ENCODE measurements at regions of chr9 and their contacts with region 1.

Region 1: GRCh38 chr9:124861342-124862229 is at the starts of genes ARPC5L and RPL35:
- DNase-seq: peak; percentile 96
- ATAC-seq: peak; percentile 96
- H3K4me3 ChIP-seq: peak within 1 kb of the TSS; percentile 43 to 91 (median 81)
- H3K4me3 Mint-ChIP-seq: peak within 1 kb of the TSS; percentile 99
- H3K27ac ChIP-seq: peak within 1 kb of the TSS; percentile 88 to 93
- H3K27ac Mint-ChIP-seq: peak within 1 kb of the TSS; percentile 98
- H3K4me1 ChIP-seq: peaks cover 18 to 34% of the 10 kb centered on the region in 2 donors
- H3K4me1 Mint-ChIP-seq: peaks cover 28% of the 10 kb centered on the region
- H3K27me3 ChIP-seq: no peaks in the 10 kb centered on the region
- H3K27me3 Mint-ChIP-seq: no peaks in the 10 kb centered on the region
- CTCF ChIP-seq: peak; percentile 48
- total RNA-seq, gene ARPC5L: 37.3 and 41.2 TPM in 2 replicates
- total RNA-seq, gene RPL35: 1,533 and 1,609 TPM in 2 replicates

Region 2: DNA sequence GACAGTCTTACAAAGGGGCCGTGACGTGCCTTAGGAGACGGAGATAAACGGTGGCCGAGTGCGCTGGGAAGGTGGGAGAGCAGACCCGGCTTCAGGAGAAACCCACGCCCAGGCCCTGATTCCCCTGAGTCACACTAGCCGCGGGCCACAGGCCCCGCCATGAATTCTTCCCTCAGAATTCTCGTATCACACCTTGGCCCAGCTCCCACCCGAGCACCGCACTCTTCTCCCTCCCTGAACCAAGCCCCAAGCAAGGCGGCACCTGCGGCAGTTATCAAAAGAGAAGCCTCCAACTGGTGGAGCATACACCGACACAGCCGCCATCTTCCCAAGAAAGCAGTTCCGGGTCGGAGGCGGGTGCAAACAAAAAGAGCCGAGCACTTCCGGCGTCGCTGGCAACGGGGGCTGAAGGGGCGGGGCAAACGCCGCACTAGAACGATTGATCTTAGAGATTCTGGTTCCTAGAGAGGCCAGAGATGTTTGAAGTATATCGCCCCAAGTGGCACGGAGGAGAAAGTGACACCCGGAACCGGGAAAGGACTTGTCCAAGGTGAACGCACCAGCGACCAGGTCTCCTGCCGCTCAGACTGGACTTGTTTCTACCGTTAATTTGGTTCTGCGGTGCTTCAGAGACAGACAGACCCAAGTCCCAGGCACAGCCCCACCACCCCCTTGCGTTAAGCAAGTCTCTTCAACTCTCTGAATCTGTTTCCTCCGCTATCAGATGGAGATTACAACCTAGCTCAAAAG is 446.3 kb before region 1 on chr9 and contains the start of gene PSMB7:
- CTCF ChIA-PET with region 1: no interaction called
- POLR2A ChIA-PET with region 1: no interaction called
- intact Hi-C with region 1: loop called (anchors 5 kb)
- DNase-seq: peak; percentile 98
- ATAC-seq: peak; percentile 96
- H3K4me3 ChIP-seq: peak within 1 kb of the TSS; percentile 81 to 89 (median 87)
- H3K4me3 Mint-ChIP-seq: peak within 1 kb of the TSS; percentile 98
- H3K27ac ChIP-seq: peak within 1 kb of the TSS; percentile 48 to 82
- H3K27ac Mint-ChIP-seq: peak within 1 kb of the TSS; percentile 90
- H3K4me1 ChIP-seq: peaks cover 6 to 27% of the 10 kb centered on the region in 2 donors
- H3K4me1 Mint-ChIP-seq: peaks cover 29% of the 10 kb centered on the region
- H3K27me3 ChIP-seq: no peaks in the 10 kb centered on the region
- H3K27me3 Mint-ChIP-seq: no peaks in the 10 kb centered on the region
- CTCF ChIP-seq: peak; percentile 89
- total RNA-seq, gene PSMB7: 69.7 and 73.1 TPM in 2 replicates

Region 3: GRCh38 chr9:125200210-125201047 is 338.8 kb after region 1 on chr9 and contains the start of gene RABEPK:
- CTCF ChIA-PET with region 1: no interaction called
- POLR2A ChIA-PET with region 1: interaction called, 6 read pairs
- intact Hi-C with region 1: loop called (anchors 5 kb)
- DNase-seq: peak; percentile 94
- ATAC-seq: peak; percentile 98
- H3K4me3 ChIP-seq: peak within 1 kb of the TSS; percentile 61 to 96 (median 83)
- H3K4me3 Mint-ChIP-seq: peak within 1 kb of the TSS; percentile 96
- H3K27ac ChIP-seq: peak within 1 kb of the TSS; percentile 79 to 93
- H3K27ac Mint-ChIP-seq: peak within 1 kb of the TSS; percentile 95
- H3K4me1 ChIP-seq: peaks cover 10 to 16% of the 10 kb centered on the region in 2 donors
- H3K4me1 Mint-ChIP-seq: peaks cover 15% of the 10 kb centered on the region
- H3K27me3 ChIP-seq: no peaks in the 10 kb centered on the region
- H3K27me3 Mint-ChIP-seq: no peaks in the 10 kb centered on the region
- CTCF ChIP-seq: no peak
- total RNA-seq, gene RABEPK: 9.0 and 11.6 TPM in 2 replicates

Region 4: GRCh38 chr9:125241000-125241862 is 379.6 kb after region 1 on chr9 and contains the start of gene HSPA5:
- CTCF ChIA-PET with region 1: no interaction called
- POLR2A ChIA-PET with region 1: no interaction called
- intact Hi-C with region 1: loop called (anchors 5 kb)
- DNase-seq: peak; percentile 100
- ATAC-seq: peak; percentile 90
- H3K4me3 ChIP-seq: peak within 1 kb of the TSS; percentile 82 to 98 (median 92)
- H3K4me3 Mint-ChIP-seq: peak within 1 kb of the TSS; percentile 95
- H3K27ac ChIP-seq: peak within 1 kb of the TSS; percentile 98 to 99
- H3K27ac Mint-ChIP-seq: peak within 1 kb of the TSS; percentile 93
- H3K4me1 ChIP-seq: peaks cover 16 to 26% of the 10 kb centered on the region in 2 donors
- H3K4me1 Mint-ChIP-seq: peaks cover 50% of the 10 kb centered on the region
- H3K27me3 ChIP-seq: no peaks in the 10 kb centered on the region
- H3K27me3 Mint-ChIP-seq: no peaks in the 10 kb centered on the region
- CTCF ChIP-seq: no peak
- total RNA-seq, gene HSPA5: 40.1 and 42.6 TPM in 2 replicates

Region 5: GRCh38 chr9:126804696-126805545 is 1943.3 kb after region 1 on chr9 and contains the start of gene ZBTB43:
- CTCF ChIA-PET with region 1: no interaction called
- POLR2A ChIA-PET with region 1: no interaction called
- intact Hi-C with region 1: loop called (anchors 10 kb)
- DNase-seq: peak; percentile 97
- ATAC-seq: peak; percentile 85
- H3K4me3 ChIP-seq: peak within 1 kb of the TSS; percentile 83 to 94 (median 88)
- H3K4me3 Mint-ChIP-seq: peak within 1 kb of the TSS; percentile 87
- H3K27ac ChIP-seq: peak within 1 kb of the TSS; percentile 75 to 89
- H3K27ac Mint-ChIP-seq: peak within 1 kb of the TSS; percentile 97
- H3K4me1 ChIP-seq: peaks cover 17 to 20% of the 10 kb centered on the region in 2 donors
- H3K4me1 Mint-ChIP-seq: peaks cover 31% of the 10 kb centered on the region
- H3K27me3 ChIP-seq: no peaks in the 10 kb centered on the region
- H3K27me3 Mint-ChIP-seq: no peaks in the 10 kb centered on the region
- CTCF ChIP-seq: no peak
- total RNA-seq, gene ZBTB43: 19.5 and 20.2 TPM in 2 replicates